K562 (cell line): ENCODE measurements at regions of chr1 and their contacts with region 1.

Region 1: DNA sequence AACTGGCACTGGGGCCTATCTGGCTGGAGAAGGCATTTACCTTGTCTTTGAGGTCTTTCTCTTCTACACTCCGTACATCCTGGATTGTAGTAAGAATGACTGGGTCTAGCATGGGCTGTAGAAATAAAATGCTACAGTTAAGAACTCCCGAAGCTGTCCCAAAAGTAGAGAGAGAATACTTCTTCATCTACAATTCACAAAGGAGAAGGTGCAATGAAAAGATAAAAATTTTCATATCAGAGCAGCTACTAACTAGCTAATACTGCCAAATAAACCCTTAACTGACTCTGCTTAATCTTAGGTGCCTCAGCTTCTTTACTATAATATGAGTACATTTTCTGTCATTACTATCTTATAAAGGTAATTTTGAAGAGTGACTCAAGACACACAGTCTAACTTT is 55.6 kb downstream of the USP24 start:
- DNase-seq: no peak
- ATAC-seq: no peak
- H3K4me3 ChIP-seq: no peak overlapping the region
- H3K27ac ChIP-seq: no peak overlapping the region
- H3K4me1 ChIP-seq: no peaks in the 10 kb centered on the region
- H3K27me3 ChIP-seq: no peaks in the 10 kb centered on the region
- CTCF ChIP-seq: no peak
- EP300 ChIP-seq: no peak
- POLR2A ChIP-seq: no peak
- RAD21 ChIP-seq: no peak

Region 2: GRCh38 chr1:55146781-55147180 is 12.8 kb before region 1 on chr1:
- CTCF ChIA-PET with region 1: interaction called, 3 read pairs
- POLR2A ChIA-PET with region 1: interaction called, 10 read pairs
- in situ Hi-C with region 1: no loop called
- intact Hi-C with region 1: no loop called
- DNase-seq: peak; percentile 25 to 84 (median 44)
- ATAC-seq: peak; percentile 57
- H3K4me3 ChIP-seq: no peak overlapping the region
- H3K27ac ChIP-seq: no peak overlapping the region
- H3K4me1 ChIP-seq: peaks cover 0 to 3% of the 10 kb centered on the region in 2 experiments; a peak in 1 of 5 replicates
- H3K27me3 ChIP-seq: no peaks in the 10 kb centered on the region
- CTCF ChIP-seq: no peak
- EP300 ChIP-seq: no peak
- POLR2A ChIP-seq: no peak
- RAD21 ChIP-seq: no peak